AG04450 (cell line): ENCODE measurements at regions of chr12 and their contacts with region 1.

Region 1: DNA sequence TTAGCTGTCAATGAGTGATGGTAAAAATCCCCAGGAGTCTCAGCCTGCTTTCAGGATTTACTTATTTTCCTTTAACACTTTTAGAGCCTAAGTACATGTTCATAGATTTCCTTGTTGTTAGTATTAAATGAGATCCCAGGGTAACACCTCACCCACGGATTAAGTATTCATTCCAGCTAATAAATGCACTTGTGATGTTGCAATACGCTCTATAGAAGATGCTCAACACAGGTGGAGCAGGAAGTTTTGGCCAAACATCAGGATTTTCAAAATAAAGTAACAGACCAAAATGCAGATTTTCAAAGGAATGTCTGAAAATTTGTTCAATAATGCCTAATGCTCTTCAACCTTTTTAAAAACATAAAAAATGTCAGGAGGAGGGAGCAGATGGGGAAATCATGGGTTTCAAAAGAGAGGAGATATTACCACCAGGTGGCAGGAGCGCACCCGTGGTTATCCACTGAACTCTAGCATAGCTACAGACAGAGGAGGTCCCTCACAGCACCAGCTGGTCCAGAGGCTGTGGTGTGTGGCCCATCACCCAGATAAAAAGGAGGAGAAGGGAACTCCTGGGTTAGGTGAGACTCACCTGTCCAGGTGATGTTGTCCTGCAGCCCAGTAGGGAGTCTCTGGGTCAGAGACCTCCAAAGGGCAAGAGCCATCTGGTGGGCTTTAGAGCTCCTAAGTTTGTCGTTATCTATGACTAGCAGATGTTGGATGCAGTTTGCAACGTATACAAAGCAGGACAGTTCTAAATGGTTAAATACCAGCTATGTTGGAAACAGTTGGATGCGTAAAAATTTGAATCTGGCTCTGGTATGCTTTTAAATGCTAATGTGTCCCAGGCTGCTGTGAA is 1158.4 kb upstream of the TMEM132C start:
- DNase-seq: no peak
- H3K4me3 ChIP-seq: no peak overlapping the region
- H3K27ac ChIP-seq: no peak overlapping the region
- H3K27me3 ChIP-seq: no peaks in the 10 kb centered on the region
- CTCF ChIP-seq: peak; percentile 65

Region 2: DNA sequence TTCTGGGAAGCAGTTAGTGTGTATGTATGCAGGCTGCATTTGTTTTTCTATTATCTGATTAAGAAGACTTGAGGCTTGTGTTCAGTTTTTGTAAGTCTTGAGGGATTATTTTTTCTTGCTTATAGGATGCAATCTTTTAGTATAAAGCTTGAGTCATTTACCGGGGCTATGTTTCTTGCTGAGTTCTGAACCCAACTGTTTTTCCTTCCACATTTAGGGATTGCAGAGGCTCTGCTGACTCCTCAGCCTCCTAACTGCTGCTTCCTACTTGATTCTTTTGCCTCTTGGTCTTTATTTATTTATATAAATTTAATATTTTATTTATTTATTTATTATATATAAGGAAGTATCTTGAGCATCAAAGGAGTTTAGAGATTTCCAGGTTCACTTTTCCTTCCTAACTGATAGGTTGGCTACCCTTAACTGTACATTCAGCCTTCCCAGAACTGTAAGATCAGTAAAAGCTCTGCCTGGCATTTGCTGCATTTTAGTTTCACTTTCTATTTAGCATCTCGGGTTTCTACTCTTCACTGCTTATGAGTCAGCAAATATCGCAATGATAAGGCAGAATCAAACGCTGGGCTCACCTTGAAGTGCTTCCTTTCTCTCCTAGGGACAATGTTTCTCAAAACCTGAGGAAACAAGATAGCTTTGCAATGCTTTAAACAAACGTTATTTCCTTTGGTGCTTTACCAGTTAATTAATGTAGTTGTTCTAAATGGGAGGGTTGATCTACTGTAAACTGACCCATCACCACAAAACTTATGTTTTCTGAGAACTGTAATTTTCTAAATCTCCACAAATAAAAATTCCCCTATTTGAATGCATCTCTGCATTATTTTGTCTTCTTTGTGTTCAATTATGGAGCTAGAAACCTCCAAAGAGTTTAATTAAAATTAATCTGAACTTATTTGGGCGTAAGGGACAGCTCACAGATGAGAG is 25.3 kb before region 1 on chr12:
- CTCF ChIA-PET with region 1: interaction called, 11 read pairs
- POLR2A ChIA-PET with region 1: no interaction called
- DNase-seq: peak; percentile 30
- H3K4me3 ChIP-seq: peak overlapping the region; percentile 47
- H3K27ac ChIP-seq: peak overlapping the region; percentile 57
- H3K27me3 ChIP-seq: no peaks in the 10 kb centered on the region
- CTCF ChIP-seq: no peak

Region 3: DNA sequence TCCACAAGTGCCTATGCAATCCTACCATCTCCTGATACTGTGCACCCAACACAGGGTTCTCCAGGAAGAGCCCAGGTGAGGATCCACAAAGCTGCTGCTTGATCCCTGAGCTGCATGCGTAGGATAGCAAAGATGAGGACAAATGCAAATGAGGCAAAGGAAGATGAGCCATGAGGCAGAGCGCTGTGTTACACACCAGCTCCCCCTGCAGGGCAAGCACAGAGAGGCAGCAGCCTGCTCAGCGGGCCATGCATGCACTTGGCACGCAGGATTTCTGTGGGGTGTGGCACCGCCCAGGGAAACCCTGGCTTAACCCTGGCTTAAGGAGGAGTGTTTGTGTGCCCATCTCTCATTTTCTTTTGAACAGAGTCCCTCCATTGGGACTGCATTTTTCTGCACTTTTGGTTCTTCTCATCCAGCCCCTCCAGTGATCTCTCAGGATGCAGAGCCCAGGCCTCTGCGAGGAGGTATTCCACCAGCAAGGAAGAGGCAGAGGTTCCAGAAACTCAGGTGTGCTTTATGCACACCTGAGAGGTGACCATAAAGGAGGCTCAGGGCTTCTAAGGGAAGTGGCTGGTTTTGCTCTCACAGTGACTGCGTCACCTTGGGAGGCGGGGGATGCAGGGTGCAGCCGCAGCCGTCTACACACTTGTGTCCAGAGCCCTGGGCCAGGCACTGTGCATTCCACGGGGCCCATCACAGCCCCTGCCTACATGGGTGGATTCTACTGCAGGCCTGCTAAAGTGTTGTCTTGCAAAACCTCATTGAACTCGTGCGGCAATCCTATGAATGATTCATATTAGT is 185.1 kb after region 1 on chr12:
- CTCF ChIA-PET with region 1: interaction called, 68 read pairs
- POLR2A ChIA-PET with region 1: no interaction called
- DNase-seq: no peak
- H3K4me3 ChIP-seq: no peak overlapping the region
- H3K27ac ChIP-seq: no peak overlapping the region
- H3K27me3 ChIP-seq: no peaks in the 10 kb centered on the region
- CTCF ChIP-seq: peak; percentile 73

Region 4: DNA sequence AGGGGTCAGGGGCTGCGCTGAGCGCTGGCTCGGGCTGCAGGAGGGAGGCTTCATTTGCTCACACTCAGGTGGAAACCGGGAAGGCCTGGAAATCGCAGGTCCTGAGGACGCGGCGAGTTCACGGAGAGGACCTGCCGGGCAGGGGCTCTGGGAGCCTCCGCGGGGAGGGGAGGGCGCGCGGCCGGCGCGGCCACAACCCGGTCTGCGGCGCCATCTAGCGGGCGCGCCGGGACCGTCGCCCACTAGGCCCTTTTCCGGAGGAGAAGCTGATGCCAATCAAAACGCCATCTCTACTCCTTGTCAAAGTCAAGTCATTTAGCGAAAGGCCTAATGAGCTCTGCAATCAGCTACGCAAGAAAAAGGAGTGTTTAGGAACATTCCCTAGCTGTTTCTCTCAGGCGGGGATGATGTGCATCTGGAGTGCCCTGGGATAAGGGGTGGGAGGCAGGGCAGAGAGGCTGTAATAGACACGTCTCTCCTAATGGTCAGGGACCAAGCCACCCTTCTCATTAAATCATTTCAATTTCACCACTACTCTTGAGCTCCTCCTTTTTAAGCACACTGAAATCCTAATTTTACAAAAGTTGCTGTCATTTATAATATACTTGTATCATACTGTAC is 272.6 kb after region 1 on chr12:
- CTCF ChIA-PET with region 1: interaction called, 65 read pairs
- POLR2A ChIA-PET with region 1: no interaction called
- DNase-seq: no peak
- H3K4me3 ChIP-seq: peak overlapping the region; percentile 55
- H3K27ac ChIP-seq: no peak overlapping the region
- H3K27me3 ChIP-seq: no peaks in the 10 kb centered on the region
- CTCF ChIP-seq: peak; percentile 74

Region 5: GRCh38 chr12:127690161-127690560 is 581.6 kb after region 1 on chr12:
- CTCF ChIA-PET with region 1: interaction called, 10 read pairs
- POLR2A ChIA-PET with region 1: no interaction called
- DNase-seq: no peak
- H3K4me3 ChIP-seq: no peak overlapping the region
- H3K27ac ChIP-seq: no peak overlapping the region
- H3K27me3 ChIP-seq: no peaks in the 10 kb centered on the region
- CTCF ChIP-seq: peak; percentile 38